WTC11 (cell line): ENCODE measurements at regions of chr6 and their contacts with region 1.

Region 1: GRCh38 chr6:17803409-17803808 is 96.7 kb upstream of the NUP153 start:
- DNase-seq: no peak
- ATAC-seq: no peak
- H3K4me3 Mint-ChIP-seq: no peak overlapping the region
- H3K27ac Mint-ChIP-seq: no peak overlapping the region
- H3K4me1 Mint-ChIP-seq: 0 out of 2 replicates have a peak, but pooled peaks cover 2% of the 10 kb centered on the region
- H3K27me3 Mint-ChIP-seq: no peaks in the 10 kb centered on the region
- CTCF ChIP-seq: no peak

Region 2: GRCh38 chr6:17679726-17680125 is 123.7 kb before region 1 on chr6:
- CTCF ChIA-PET with region 1: no interaction called
- POLR2A ChIA-PET with region 1: no interaction called
- DNase-seq: peak; percentile 20
- ATAC-seq: peak; percentile 91
- H3K4me3 Mint-ChIP-seq: no peak overlapping the region
- H3K27ac Mint-ChIP-seq: peak overlapping the region; percentile 78
- H3K4me1 Mint-ChIP-seq: peaks cover 54% of the 10 kb centered on the region
- H3K27me3 Mint-ChIP-seq: no peaks in the 10 kb centered on the region
- CTCF ChIP-seq: no peak

Region 3: GRCh38 chr6:17700421-17701416 is 102.7 kb before region 1 on chr6:
- CTCF ChIA-PET with region 1: interaction called, 17 read pairs
- POLR2A ChIA-PET with region 1: no interaction called
- DNase-seq: no peak
- ATAC-seq: no peak
- H3K4me3 Mint-ChIP-seq: no peak overlapping the region
- H3K27ac Mint-ChIP-seq: no peak overlapping the region
- H3K4me1 Mint-ChIP-seq: peaks cover 24% of the 10 kb centered on the region
- H3K27me3 Mint-ChIP-seq: no peaks in the 10 kb centered on the region
- CTCF ChIP-seq: no peak

Region 4: DNA sequence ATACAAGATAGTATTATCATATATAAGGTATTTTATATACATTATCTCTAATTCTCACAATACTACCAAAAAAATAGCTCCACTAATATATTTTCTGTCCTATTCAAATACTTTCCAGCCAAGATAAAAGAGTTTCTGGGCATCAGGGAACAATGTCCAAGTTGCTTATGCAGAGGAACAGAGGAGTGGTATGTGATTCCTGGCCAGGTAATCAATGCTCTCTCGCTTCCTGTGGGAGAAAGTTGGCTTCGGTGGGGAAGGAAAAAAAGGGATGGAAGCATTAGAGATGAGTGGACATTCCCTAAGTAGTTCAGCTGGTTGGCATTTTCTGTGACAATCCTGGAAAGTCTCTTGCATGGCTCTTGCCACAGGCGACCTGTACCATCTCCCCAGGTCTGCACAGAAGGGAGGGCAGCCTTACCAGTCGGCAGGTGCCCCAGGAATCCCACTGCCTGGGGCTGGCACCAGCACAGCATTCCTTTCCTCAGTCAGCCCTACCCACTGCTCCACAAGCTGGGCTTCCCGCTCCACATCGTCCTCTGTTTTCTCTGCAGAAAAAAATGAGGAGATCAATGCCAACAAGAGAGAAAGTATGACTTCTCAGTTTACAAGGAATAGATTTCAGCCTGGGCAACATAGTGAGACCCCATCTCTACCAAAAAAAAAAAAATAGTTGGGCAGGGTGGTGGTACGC is 18.2 kb before region 1 on chr6:
- CTCF ChIA-PET with region 1: no interaction called
- POLR2A ChIA-PET with region 1: no interaction called
- DNase-seq: no peak
- ATAC-seq: no peak
- H3K4me3 Mint-ChIP-seq: no peak overlapping the region
- H3K27ac Mint-ChIP-seq: 0 out of 2 replicates have a peak overlapping the region, but pooled peaks have one; percentile 2
- H3K4me1 Mint-ChIP-seq: peaks cover 16% of the 10 kb centered on the region
- H3K27me3 Mint-ChIP-seq: no peaks in the 10 kb centered on the region
- CTCF ChIP-seq: no peak

Region 5: DNA sequence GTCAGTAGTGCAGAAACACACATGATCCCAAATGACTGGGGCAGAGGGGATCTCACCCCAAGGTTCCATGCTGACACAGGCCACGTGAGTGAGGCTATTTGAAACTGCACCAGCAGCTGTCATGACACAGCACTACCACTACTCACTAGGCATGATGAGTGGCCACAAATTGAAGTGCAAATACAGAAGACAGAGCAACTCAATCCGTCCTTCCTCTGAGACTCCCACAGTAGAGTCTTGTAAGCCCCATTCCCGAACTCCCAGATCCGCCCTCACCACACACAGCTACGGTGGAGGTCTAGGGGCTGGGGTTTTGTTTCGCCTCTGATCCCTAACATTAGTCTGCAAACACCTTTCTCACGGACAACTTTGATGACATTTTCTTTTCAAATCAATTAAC is 16.6 kb after region 1 on chr6:
- CTCF ChIA-PET with region 1: interaction called, 10 read pairs
- POLR2A ChIA-PET with region 1: interaction called, 3 read pairs
- DNase-seq: no peak
- ATAC-seq: peak; percentile 79
- H3K4me3 Mint-ChIP-seq: no peak overlapping the region
- H3K27ac Mint-ChIP-seq: no peak overlapping the region
- H3K4me1 Mint-ChIP-seq: peaks cover 6% of the 10 kb centered on the region
- H3K27me3 Mint-ChIP-seq: no peaks in the 10 kb centered on the region
- CTCF ChIP-seq: no peak

Region 6: DNA sequence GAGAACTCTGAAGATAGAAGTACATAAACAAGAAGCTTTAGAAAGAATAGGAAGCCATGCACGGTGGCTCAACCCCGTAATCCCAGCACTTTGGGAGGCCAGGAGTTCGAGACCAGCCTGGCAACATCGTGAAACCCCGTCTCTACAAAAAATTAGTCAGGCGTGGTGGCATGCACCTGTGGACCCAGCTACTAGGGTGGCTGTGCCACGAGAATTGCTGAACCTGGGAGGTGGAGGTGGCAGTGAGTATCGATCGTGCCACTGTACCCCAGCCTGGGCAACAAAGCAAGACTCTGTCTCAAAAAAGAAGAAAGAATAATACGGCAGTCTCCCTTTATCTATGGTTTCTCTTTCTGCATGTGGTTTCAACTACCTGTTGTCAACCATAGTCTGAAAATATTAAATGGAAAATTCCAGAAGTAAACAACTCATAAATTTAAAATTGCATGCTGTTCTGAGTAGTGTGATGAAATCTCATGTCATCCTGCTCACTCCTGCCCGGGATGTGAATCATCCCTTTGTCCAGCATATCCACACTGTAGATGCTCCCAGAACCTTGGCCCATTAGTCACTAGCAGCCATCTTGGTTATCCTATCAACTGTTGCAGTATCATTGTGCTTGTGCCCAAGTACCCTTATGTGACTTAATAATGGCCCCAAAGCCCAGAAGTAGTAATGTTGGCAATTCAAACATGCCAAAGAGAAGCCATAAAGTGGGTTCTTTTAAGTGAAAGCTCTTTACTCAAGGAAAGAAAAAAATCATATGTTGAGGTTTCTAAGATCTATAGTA is 438.8 kb after region 1 on chr6:
- CTCF ChIA-PET with region 1: no interaction called
- POLR2A ChIA-PET with region 1: no interaction called
- DNase-seq: no peak
- ATAC-seq: no peak
- H3K4me3 Mint-ChIP-seq: no peak overlapping the region
- H3K27ac Mint-ChIP-seq: peak overlapping the region; percentile 89
- H3K4me1 Mint-ChIP-seq: peaks cover 36% of the 10 kb centered on the region
- H3K27me3 Mint-ChIP-seq: no peaks in the 10 kb centered on the region
- CTCF ChIP-seq: no peak